ENCODE measurements at regions of chr17 and their contacts with region 1.

Region 1: DNA sequence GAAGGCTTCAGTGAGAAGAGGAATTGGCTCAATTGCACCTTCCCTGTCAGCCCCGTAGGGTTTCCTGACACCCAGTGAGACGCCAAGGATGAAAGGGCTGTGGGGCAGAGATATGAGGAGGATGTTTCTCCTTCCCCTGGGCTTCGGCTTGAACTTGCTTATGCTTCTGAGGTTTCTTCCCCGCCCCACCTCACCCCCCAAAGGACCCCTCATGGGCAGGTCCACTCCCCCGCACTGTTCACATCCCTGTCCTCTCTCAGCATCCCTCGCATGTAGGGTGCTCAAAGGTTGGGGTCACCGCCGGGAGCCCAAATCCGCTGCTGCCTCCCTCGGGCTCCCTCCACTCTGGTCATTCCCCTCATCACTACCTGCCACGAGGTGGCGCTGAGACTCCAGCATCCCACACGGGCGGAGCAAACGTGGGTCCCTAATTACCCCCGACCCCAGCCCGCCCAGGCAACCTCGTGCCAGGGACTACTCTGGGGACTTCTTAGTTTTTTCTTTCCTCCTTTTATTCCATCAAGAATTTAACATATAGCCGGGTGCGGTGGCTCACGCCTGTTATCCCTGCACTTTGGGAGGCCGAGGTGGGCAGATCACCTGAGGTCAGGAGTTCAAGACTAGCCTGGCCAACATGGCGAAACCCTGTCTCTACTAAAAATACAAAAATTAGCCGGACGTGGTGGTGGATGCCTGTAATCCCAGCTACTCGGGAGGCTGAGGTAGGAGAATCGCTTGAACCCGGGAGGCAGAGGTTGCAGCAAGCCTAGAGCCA is 3.3 kb upstream of the TRARG1 start:
- DNase-seq: peak; percentile 84
- ATAC-seq: peak; percentile 80

Region 2: GRCh38 chr17:1331708-1332107 is 55.6 kb after region 1 on chr17:
- intact Hi-C with region 1: loop called (anchors 5 kb)
- DNase-seq: peak; percentile 68
- ATAC-seq: peak; percentile 98

Measured in left ventricle myocardium superior (tissue), 1 donor.